Activated B cell treated with CpG ODN at 0.5 μM for 24 hours (primary cell): ENCODE measurements at regions of chr3 and their contacts with region 1.

Region 1: DNA sequence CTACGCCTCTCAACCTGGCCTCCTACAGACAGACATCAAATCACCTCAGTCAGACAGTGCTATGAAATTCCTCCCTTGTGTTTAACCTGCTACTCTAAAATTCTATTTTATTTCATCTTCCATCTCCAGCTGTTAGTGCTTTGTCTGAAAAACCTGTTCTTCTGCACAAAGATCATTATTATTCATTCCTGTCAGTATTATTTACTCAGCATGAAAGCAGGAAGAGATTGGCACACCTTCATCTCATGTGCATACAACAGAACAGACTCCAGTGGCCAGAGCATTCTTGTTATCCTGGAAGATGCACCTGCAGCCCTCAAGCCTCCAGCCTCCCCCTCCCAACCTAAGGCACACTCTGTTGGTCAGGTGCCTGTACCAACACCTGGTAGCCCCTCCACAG is 1.8 kb upstream of the ROPN1B start:
- DNase-seq: no peak
- ATAC-seq: no peak
- H3K4me3 Mint-ChIP-seq: no peak overlapping the region
- H3K27ac Mint-ChIP-seq: no peak overlapping the region
- H3K4me1 Mint-ChIP-seq: peaks cover 4% of the 10 kb centered on the region
- H3K27me3 Mint-ChIP-seq: peaks cover 16% of the 10 kb centered on the region
- CTCF ChIP-seq: no peak

Region 2: GRCh38 chr3:125608419-125608818 is 358.7 kb before region 1 on chr3:
- CTCF ChIA-PET with region 1: no interaction called
- POLR2A ChIA-PET with region 1: no interaction called
- intact Hi-C with region 1: no loop called
- DNase-seq: no peak
- ATAC-seq: no peak
- H3K4me3 Mint-ChIP-seq: no peak overlapping the region
- H3K27ac Mint-ChIP-seq: no peak overlapping the region
- H3K4me1 Mint-ChIP-seq: no peaks in the 10 kb centered on the region
- H3K27me3 Mint-ChIP-seq: peaks cover 8% of the 10 kb centered on the region
- CTCF ChIP-seq: no peak

Region 3: DNA sequence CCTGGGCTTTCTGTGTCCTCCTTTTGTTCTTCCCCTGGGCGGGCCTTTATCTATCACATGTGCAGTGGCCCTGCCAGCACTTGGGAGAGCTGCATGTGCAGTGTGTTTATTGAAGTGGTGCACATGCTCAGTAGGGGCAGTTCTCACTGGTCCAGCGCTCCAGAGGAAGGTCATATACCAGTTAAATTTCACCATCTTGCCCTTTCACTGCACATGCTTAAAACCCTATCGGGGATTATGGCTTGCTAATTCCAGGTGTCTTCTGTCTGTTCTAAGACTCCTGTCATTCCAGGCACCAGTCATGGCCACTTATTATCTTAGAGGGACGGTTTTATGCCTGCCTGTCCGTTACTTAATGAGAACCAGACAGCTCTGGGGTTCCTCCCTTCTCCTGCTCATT is 54.1 kb after region 1 on chr3:
- CTCF ChIA-PET with region 1: no interaction called
- POLR2A ChIA-PET with region 1: no interaction called
- intact Hi-C with region 1: no loop called
- DNase-seq: no peak
- ATAC-seq: no peak
- H3K4me3 Mint-ChIP-seq: no peak overlapping the region
- H3K27ac Mint-ChIP-seq: no peak overlapping the region
- H3K4me1 Mint-ChIP-seq: peaks cover 8% of the 10 kb centered on the region
- H3K27me3 Mint-ChIP-seq: no peaks in the 10 kb centered on the region
- CTCF ChIP-seq: no peak

Region 4: DNA sequence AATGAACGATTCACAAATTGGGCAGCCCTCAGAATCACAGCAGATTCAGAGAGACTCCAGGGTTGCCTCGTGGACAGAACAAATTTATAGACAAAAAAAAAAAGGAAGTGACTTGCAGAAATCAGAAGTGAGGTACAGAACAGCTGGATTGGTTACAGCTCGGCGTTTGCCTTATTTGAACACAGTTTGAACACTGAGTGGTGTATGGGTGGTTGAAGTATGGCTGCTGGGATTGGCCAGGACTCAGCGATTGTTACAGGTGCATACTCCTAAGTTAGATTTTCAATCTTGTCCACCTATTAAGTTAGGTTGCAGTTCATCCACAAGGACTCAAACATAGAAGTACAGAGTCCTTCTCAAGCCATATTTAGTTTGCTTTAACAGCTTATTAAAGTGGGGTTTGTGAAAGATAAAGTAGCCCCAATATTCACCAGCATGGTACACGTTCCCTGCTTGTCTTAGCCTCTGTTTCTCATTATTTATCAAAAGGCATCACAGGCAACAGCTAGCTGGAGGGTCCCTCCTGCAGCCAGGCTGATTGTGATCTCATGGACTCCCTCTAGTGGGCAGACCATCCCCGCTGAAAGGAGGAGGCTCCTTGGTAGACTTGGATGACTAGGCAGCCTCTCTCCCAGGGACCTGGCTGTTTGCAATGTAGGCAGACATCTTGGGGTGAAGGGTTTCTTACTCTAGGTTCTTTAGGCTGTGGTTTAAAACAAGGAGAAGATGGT is 230.9 kb after region 1 on chr3:
- CTCF ChIA-PET with region 1: no interaction called
- POLR2A ChIA-PET with region 1: no interaction called
- intact Hi-C with region 1: loop called (anchors 5 kb)
- DNase-seq: no peak
- ATAC-seq: peak; percentile 45
- H3K4me3 Mint-ChIP-seq: no peak overlapping the region
- H3K27ac Mint-ChIP-seq: no peak overlapping the region
- H3K4me1 Mint-ChIP-seq: no peaks in the 10 kb centered on the region
- H3K27me3 Mint-ChIP-seq: peaks cover 14% of the 10 kb centered on the region
- CTCF ChIP-seq: peak; percentile 37